Uterus (tissue), 4 donors: ENCODE measurements at regions of chr1 and their contacts with region 1.

Region 1: DNA sequence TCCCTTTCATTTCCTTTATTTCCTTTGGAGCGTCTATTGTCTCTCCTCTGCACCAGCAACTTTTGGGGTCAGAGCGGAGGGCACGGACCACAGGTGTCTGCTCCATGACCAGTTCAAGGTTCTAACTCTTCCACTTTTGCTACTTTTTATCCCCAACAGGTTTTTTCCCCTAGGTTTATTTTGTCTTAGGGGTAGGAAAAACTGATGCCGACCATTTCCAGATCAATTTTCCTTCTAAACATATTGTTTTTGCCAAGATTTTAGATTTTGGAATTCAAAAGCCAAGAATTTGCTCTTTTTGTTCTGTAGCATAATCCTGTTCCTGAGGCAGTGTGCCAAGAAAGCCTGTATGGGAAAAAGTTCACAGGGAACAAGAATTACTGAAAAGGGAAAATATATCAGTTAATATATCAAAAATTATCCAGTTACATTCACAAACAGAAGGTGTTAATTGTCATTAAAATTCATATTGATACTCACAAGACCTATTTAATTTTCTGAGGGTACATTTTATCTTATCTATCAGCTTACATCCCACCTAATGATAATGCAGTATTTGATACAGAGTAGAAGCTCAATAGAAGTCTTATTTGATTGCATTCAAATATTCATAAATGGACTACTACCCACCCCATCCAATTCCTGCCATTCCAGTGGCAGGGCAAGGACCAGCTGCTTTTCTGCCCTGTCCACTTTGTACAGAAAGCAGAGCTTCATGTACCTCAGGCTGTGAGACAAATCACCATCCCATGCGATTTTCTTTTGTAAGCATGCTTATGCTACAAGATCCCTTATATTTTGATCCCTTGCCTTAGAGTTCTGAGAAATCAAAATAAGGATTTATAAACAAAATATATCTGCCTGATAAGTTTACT is 31.2 kb downstream of the TSEN15 start:
- DNase-seq: no peak
- H3K4me3 ChIP-seq: no peak overlapping the region
- H3K27ac ChIP-seq: no peak overlapping the region
- H3K4me1 ChIP-seq: no peaks in the 10 kb centered on the region
- H3K27me3 ChIP-seq: no peaks in the 10 kb centered on the region
- CTCF ChIP-seq: no peak
- POLR2A ChIP-seq: no peak

Region 2: GRCh38 chr1:184222652-184223052 is 139.9 kb after region 1 on chr1:
- intact Hi-C with region 1: loop called (anchors 10 kb)
- DNase-seq: peak; percentile 35 to 52
- H3K4me3 ChIP-seq: no peak overlapping the region
- H3K27ac ChIP-seq: peak overlapping the region in 1 of 2 donors; percentile 25
- H3K4me1 ChIP-seq: no peaks in the 10 kb centered on the region
- H3K27me3 ChIP-seq: no peaks in the 10 kb centered on the region
- CTCF ChIP-seq: peak; percentile 78 to 87 (median 84)
- POLR2A ChIP-seq: no peak